ENCODE measurements at regions of chr14 and their contacts with region 1.

Region 1: GRCh38 chr14:39102969-39103957 is at the start of gene SEC23A:
- DNase-seq: peak; percentile 91
- H3K4me3 ChIP-seq: peak within 1 kb of the TSS; percentile 70 to 98 (median 92)
- H3K27ac ChIP-seq: peak within 1 kb of the TSS; percentile 83
- H3K4me1 ChIP-seq: peaks cover 16% of the 10 kb centered on the region
- H3K27me3 ChIP-seq: no peaks in the 10 kb centered on the region
- CTCF ChIP-seq: no peak
- POLR2A ChIP-seq: peak; percentile 80
- total RNA-seq, gene SEC23A: 155 and 156 TPM in 2 replicates

Region 2: GRCh38 chr14:38616959-38617358 is 486.3 kb before region 1 on chr14:
- CTCF ChIA-PET with region 1: no interaction called
- POLR2A ChIA-PET with region 1: no interaction called
- dilution Hi-C with region 1: no loop called
- intact Hi-C with region 1: no loop called
- DNase-seq: no peak
- H3K4me3 ChIP-seq: no peak overlapping the region
- H3K27ac ChIP-seq: no peak overlapping the region
- H3K4me1 ChIP-seq: no peaks in the 10 kb centered on the region
- H3K27me3 ChIP-seq: no peaks in the 10 kb centered on the region
- CTCF ChIP-seq: no peak
- POLR2A ChIP-seq: no peak

Region 3: DNA sequence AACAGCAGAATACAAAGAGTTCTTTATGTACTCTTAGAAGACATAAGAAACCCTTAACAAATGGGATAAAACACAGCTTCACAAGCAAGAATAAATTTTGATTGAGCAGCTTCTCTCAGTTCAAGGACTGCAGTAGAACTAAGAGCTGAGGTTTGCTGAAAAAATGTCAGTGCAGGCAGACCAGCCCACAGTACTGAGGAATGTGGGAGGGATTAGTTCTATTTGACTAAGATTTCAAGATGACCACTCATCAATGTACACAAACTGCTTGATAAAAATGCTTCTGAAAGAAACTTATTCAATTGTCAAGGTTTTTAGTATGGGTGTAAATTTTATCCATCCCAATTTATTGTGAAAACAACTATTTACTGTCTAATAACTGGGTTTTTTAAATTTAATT is 138.6 kb before region 1 on chr14:
- CTCF ChIA-PET with region 1: no interaction called
- POLR2A ChIA-PET with region 1: no interaction called
- dilution Hi-C with region 1: no loop called
- intact Hi-C with region 1: no loop called
- DNase-seq: no peak
- H3K4me3 ChIP-seq: no peak overlapping the region
- H3K27ac ChIP-seq: no peak overlapping the region
- H3K4me1 ChIP-seq: no peaks in the 10 kb centered on the region
- H3K27me3 ChIP-seq: no peaks in the 10 kb centered on the region
- CTCF ChIP-seq: no peak
- POLR2A ChIP-seq: no peak

Region 4: DNA sequence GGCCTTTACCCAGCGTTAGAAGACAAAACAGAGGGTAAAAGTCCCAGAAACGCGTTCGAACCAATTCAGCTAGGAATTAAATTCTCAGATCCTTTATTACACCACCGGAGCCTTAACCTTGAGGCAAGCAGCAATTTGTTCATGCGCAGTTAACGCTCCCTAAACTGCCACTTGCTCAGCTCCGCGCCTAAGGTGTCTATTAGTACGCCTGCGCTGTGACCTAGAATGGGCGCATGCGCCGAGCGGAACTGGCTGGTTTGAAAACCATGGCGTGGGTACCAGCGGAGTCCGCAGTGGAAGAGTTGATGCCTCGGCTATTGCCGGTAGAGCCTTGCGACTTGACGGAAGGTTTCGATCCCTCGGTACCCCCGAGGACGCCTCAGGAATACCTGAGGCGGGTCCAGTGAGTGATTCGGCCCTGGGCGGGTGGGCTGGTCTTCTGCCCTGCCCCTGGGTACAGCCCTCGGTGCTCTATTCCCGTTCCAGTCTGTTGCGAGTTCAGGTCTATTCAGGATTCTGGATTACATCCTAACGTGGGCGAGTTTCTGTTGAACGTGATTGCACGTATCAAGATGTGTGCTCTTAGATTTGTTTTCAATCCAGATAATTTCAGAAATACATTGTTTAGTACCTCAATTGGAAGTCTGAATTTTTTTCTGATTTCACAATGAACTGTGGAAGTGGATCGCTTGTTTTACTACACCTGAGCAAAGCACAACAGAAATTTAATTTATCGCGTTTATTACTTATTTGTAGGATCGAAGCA is 11.0 kb after region 1 on chr14 and contains the start of gene GEMIN2:
- CTCF ChIA-PET with region 1: interaction called, 9 read pairs
- POLR2A ChIA-PET with region 1: interaction called, 19 read pairs
- dilution Hi-C with region 1: no loop called
- intact Hi-C with region 1: no loop called
- DNase-seq: peak; percentile 97
- H3K4me3 ChIP-seq: peak within 1 kb of the TSS; percentile 48 to 92 (median 61)
- H3K27ac ChIP-seq: peak within 1 kb of the TSS; percentile 7
- H3K4me1 ChIP-seq: peaks cover 11% of the 10 kb centered on the region
- H3K27me3 ChIP-seq: no peaks in the 10 kb centered on the region
- CTCF ChIP-seq: no peak
- POLR2A ChIP-seq: peak; percentile 83
- total RNA-seq, gene GEMIN2: 19.5 and 20.0 TPM in 2 replicates

Region 5: GRCh38 chr14:39145266-39145966 is 42.2 kb after region 1 on chr14:
- CTCF ChIA-PET with region 1: no interaction called
- POLR2A ChIA-PET with region 1: no interaction called
- dilution Hi-C with region 1: no loop called
- intact Hi-C with region 1: no loop called
- DNase-seq: no peak
- H3K4me3 ChIP-seq: no peak overlapping the region
- H3K27ac ChIP-seq: no peak overlapping the region
- H3K4me1 ChIP-seq: no peaks in the 10 kb centered on the region
- H3K27me3 ChIP-seq: no peaks in the 10 kb centered on the region
- CTCF ChIP-seq: no peak
- POLR2A ChIP-seq: no peak

Region 6: GRCh38 chr14:39219075-39219499 is 115.8 kb after region 1 on chr14:
- CTCF ChIA-PET with region 1: no interaction called
- POLR2A ChIA-PET with region 1: no interaction called
- dilution Hi-C with region 1: no loop called
- intact Hi-C with region 1: loop called (anchors 2 kb)
- DNase-seq: peak; percentile 89
- H3K4me3 ChIP-seq: no peak overlapping the region
- H3K27ac ChIP-seq: peak overlapping the region; percentile 61
- H3K4me1 ChIP-seq: peaks cover 23% of the 10 kb centered on the region
- H3K27me3 ChIP-seq: no peaks in the 10 kb centered on the region
- CTCF ChIP-seq: no peak
- POLR2A ChIP-seq: no peak

Region 7: GRCh38 chr14:39368261-39368959 is 265.1 kb after region 1 on chr14:
- CTCF ChIA-PET with region 1: interaction called, 18 read pairs
- POLR2A ChIA-PET with region 1: no interaction called
- dilution Hi-C with region 1: no loop called
- intact Hi-C with region 1: loop called (anchors 1 kb)
- DNase-seq: peak; percentile 61
- H3K4me3 ChIP-seq: no peak overlapping the region
- H3K27ac ChIP-seq: no peak overlapping the region
- H3K4me1 ChIP-seq: no peaks in the 10 kb centered on the region
- H3K27me3 ChIP-seq: no peaks in the 10 kb centered on the region
- CTCF ChIP-seq: peak; percentile 36 to 42
- POLR2A ChIP-seq: no peak

Region 8: GRCh38 chr14:39432179-39432618 is 328.9 kb after region 1 on chr14 and contains the start of gene FBXO33:
- CTCF ChIA-PET with region 1: interaction called, 35 read pairs
- POLR2A ChIA-PET with region 1: interaction called, 9 read pairs
- dilution Hi-C with region 1: no loop called
- intact Hi-C with region 1: loop called (anchors 2 kb)
- DNase-seq: peak; percentile 96
- H3K4me3 ChIP-seq: peak within 1 kb of the TSS; percentile 81 to 85 (median 84)
- H3K27ac ChIP-seq: peak within 1 kb of the TSS; percentile 99
- H3K4me1 ChIP-seq: peaks cover 27% of the 10 kb centered on the region
- H3K27me3 ChIP-seq: no peaks in the 10 kb centered on the region
- CTCF ChIP-seq: no peak
- POLR2A ChIP-seq: no peak
- total RNA-seq, gene FBXO33: 5.0 and 6.3 TPM in 2 replicates